WTC11 (cell line): ENCODE measurements at regions of chr2 and their contacts with region 1.

Region 1: DNA sequence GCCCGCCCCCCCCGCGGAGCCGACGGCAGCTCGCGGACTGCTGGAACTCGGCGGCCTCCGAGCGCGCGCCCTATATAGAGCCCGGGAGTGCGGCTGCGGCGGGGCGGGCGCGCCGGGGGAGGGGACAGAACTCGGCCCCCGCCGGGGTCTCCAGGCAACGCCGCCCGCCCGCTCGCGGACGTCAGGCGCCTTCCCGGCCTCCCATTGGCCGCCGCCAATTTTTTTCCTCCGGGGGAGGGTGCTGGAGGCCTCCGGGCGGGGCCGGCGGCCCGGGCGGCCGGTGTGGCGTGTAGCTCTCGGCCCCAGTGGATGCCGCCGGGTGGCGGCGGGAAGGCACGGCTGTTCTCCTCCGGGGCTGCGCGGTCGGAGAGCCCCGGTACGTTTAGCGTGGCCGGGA is at the start of gene ZFP36L2:
- DNase-seq: peak; percentile 85
- ATAC-seq: peak; percentile 26
- H3K4me3 Mint-ChIP-seq: peak within 1 kb of the TSS; percentile 82
- H3K27ac Mint-ChIP-seq: peak within 1 kb of the TSS; percentile 60; the same call in 1 of the 2 replicates
- H3K4me1 Mint-ChIP-seq: peaks cover 58% of the 10 kb centered on the region
- H3K27me3 Mint-ChIP-seq: no peaks in the 10 kb centered on the region
- CTCF ChIP-seq: no peak
- total RNA-seq, gene ZFP36L2: 50.4 to 63.4 TPM (median 61.6 TPM) in 3 replicates

Region 2: DNA sequence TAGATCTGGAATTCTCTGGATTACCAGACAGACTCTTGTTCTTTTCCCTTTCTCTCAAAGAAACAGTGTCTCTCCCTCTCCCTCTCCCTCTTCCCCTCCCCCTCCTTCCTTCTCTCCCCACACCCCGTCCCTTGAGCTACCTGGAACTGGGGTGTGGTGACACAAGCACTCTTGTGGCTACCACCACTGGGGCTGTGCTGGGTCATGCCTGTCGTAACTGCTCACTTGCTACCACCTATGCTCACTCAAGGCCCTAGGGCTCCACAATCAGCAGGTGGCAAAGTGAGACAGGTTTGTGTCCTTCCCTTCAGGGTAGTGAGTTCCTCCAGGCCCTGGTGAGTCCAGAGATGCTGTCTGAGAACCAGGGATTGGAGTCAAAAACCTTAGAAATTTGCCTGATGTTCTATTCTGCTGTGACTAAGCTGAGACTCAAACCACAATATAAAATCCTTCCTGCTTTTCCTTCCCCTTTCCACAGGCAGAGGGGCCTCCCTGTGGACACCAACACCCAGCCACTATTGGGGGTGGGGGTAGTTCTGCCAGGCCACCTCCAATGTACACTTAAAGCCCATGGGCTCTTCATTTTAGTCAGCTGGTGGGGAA is 533.4 kb before region 1 on chr2:
- CTCF ChIA-PET with region 1: no interaction called
- POLR2A ChIA-PET with region 1: no interaction called
- DNase-seq: no peak
- ATAC-seq: peak; percentile 39; the same call in 1 of the 2 replicates
- H3K4me3 Mint-ChIP-seq: no peak overlapping the region
- H3K27ac Mint-ChIP-seq: peak overlapping the region; percentile 94
- H3K4me1 Mint-ChIP-seq: peaks cover 17% of the 10 kb centered on the region
- H3K27me3 Mint-ChIP-seq: no peaks in the 10 kb centered on the region
- CTCF ChIP-seq: no peak

Region 3: DNA sequence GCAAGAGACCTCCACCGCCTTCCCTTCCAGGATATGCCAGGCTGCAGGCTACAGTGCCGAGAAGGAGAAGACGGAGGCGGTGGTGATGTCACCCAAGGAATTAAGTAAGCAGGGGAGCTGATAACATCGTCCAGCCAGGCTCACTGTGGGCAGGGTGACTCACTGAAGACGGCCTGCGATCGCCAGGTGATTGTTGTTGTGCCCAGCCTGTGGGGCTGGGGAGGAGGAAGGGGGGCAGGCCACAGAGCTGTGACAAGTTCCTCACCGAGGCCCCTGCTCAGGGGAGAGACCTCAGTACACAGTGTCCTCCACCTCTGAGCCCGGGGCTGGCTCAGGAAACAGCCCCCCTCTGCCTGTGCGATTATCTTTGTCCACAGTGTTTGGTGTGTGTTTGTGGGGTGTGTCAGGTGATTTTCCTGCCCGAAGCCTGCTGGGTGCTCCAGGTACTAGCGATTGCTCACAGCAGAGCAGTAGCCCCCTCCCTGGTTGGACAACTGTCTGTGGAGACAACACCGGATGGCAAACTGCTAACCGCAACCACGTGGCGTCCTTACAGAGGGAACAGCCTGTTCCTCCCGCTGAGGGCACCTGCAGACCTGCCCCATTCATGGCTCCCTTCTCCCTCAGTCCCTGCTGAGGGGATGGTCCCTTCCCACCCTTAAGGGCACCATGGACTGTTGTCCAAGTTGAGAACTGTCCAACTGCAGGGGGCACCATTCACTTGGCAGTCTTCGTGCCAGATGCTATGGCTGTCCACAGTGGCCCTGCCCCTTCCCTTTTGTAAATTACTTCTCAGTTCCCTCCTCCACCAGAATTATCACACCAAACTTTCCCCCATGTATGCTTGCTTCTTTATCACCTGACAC is 95.3 kb before region 1 on chr2:
- CTCF ChIA-PET with region 1: interaction called, 31 read pairs
- POLR2A ChIA-PET with region 1: no interaction called
- DNase-seq: peak; percentile 62
- ATAC-seq: peak; percentile 26
- H3K4me3 Mint-ChIP-seq: no peak overlapping the region
- H3K27ac Mint-ChIP-seq: no peak overlapping the region
- H3K4me1 Mint-ChIP-seq: peaks cover 35% of the 10 kb centered on the region
- H3K27me3 Mint-ChIP-seq: no peaks in the 10 kb centered on the region; the same call in 1 of the 2 replicates
- CTCF ChIP-seq: no peak

Region 4: GRCh38 chr2:43178602-43179542 is 47.7 kb before region 1 on chr2:
- CTCF ChIA-PET with region 1: interaction called, 30 read pairs
- POLR2A ChIA-PET with region 1: interaction called, 11 read pairs
- DNase-seq: peak; percentile 73
- ATAC-seq: peak; percentile 72
- H3K4me3 Mint-ChIP-seq: peak overlapping the region; percentile 35
- H3K27ac Mint-ChIP-seq: peak overlapping the region; percentile 99
- H3K4me1 Mint-ChIP-seq: peaks cover 53% of the 10 kb centered on the region
- H3K27me3 Mint-ChIP-seq: peaks cover 6% of the 10 kb centered on the region
- CTCF ChIP-seq: no peak

Region 5: GRCh38 chr2:43191947-43192516 is 34.5 kb before region 1 on chr2:
- CTCF ChIA-PET with region 1: interaction called, 15 read pairs
- POLR2A ChIA-PET with region 1: no interaction called
- DNase-seq: peak; percentile 51
- ATAC-seq: peak; percentile 80
- H3K4me3 Mint-ChIP-seq: no peak overlapping the region
- H3K27ac Mint-ChIP-seq: peak overlapping the region; percentile 66
- H3K4me1 Mint-ChIP-seq: peaks cover 46% of the 10 kb centered on the region
- H3K27me3 Mint-ChIP-seq: no peaks in the 10 kb centered on the region
- CTCF ChIP-seq: no peak

Region 6: GRCh38 chr2:43212931-43213330 is 13.6 kb before region 1 on chr2:
- CTCF ChIA-PET with region 1: interaction called, 30 read pairs
- POLR2A ChIA-PET with region 1: interaction called, 10 read pairs
- DNase-seq: no peak
- ATAC-seq: no peak
- H3K4me3 Mint-ChIP-seq: no peak overlapping the region
- H3K27ac Mint-ChIP-seq: peak overlapping the region; percentile 92
- H3K4me1 Mint-ChIP-seq: peaks cover 52% of the 10 kb centered on the region
- H3K27me3 Mint-ChIP-seq: no peaks in the 10 kb centered on the region
- CTCF ChIP-seq: no peak

Region 7: GRCh38 chr2:43270930-43271615 is 44.5 kb after region 1 on chr2:
- CTCF ChIA-PET with region 1: interaction called, 4 read pairs
- POLR2A ChIA-PET with region 1: interaction called, 12 read pairs
- DNase-seq: no peak
- ATAC-seq: no peak
- H3K4me3 Mint-ChIP-seq: no peak overlapping the region
- H3K27ac Mint-ChIP-seq: no peak overlapping the region
- H3K4me1 Mint-ChIP-seq: peaks cover 20% of the 10 kb centered on the region
- H3K27me3 Mint-ChIP-seq: no peaks in the 10 kb centered on the region
- CTCF ChIP-seq: no peak

Region 8: DNA sequence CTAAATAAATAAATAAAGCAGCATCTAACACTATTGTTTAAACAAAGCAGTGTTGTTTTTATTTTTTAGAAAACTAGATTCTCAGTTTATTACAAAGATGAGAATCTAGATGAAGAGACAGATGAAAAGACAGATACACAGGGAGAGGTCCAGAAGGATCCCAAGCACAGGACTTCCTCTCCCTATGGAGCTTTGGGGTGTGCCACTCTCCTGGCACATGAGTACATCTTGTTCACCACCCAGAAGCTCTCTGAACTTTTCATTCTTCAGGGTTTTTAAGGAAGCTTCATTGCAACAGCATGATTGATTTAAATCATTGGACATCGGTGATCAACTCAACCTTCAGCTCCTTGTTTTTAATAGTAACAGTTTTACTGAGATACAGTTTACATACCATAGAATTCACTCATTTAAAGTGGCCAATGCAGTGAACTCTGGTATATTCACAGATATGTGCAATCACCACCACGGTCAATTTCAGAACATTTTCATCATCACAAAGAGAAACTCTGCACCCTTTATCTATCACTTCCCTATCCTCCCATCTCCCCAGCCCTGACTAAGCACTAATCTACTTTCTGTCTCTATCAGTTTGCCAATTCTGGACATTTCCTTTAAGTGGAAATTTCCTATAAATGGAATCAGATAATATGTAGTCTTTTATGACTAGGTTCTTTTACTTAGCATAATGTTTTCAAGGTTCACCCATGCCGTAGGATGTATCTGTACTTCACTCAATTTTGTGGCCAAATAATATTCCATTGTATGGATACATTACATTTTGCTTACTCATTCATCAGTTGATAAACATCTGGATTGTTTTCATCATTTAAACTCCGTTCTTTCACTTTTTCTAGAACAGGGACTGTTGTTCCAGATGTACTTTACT is 62.1 kb after region 1 on chr2:
- CTCF ChIA-PET with region 1: no interaction called
- POLR2A ChIA-PET with region 1: no interaction called
- DNase-seq: no peak
- ATAC-seq: no peak
- H3K4me3 Mint-ChIP-seq: no peak overlapping the region
- H3K27ac Mint-ChIP-seq: no peak overlapping the region
- H3K4me1 Mint-ChIP-seq: no peaks in the 10 kb centered on the region
- H3K27me3 Mint-ChIP-seq: no peaks in the 10 kb centered on the region
- CTCF ChIP-seq: no peak